ENCODE measurements at regions of chr15 and their contacts with region 1.

Region 1: DNA sequence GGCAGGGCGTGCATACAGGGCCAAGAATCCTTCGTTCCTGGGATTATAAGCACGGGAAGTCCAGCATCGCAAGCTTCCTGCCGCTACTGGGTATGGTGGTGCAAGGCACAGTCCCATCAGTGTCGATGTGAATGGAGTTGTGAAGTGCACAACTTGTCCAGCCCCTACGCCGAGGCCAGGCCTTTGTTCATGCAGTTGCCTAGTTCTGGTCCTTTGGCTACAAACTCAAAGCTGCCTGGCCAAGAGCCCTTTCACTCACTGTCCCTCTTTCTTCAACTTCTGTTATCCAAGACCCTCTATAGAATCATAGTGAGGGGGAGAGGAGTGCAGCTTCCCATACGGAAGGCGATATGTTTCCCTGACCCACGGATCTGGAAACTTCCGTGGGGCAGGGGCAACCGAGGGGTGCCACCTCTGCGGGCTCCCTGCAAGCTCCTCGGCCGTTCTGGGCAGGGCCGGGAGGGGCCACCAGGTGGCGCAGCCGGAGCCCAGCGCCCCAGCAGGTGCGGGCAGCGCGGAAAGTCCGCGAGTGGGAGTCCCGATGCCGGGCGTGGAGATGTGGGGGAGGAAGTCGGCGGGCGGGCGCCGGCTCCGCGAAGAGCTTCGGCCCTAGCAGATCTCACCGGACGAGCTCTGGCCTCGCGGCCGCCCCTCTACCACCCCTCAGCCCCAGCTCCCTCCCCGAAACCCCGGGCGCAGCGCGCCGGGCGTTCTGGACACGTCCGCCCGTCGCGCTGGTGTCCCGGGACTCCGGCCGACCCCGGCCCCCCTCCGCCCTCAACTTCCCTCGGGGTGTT is 693 bp downstream of the RASGRP1 start:
- DNase-seq: peak in 1 of 2 experiments; percentile 90
- H3K4me3 ChIP-seq: peak overlapping the region; percentile 27 to 78 (median 56)
- H3K27ac ChIP-seq: no peak overlapping the region
- H3K4me1 ChIP-seq: no peaks in the 10 kb centered on the region; a peak in 2 of 7 replicates
- H3K27me3 ChIP-seq: peaks cover 9 to 31% (median 16%) of the 10 kb centered on the region in 4 experiments; a peak in 6 of 7 replicates
- CTCF ChIP-seq: peak; percentile 71 to 84 (median 82)
- EP300 ChIP-seq: no peak
- POLR2A ChIP-seq: no peak
- RAD21 ChIP-seq: peak; percentile 36 to 61; a peak in 3 of 4 replicates

Region 2: GRCh38 chr15:38453971-38454695 is 109.8 kb before region 1 on chr15 and contains the start of gene FAM98B:
- CTCF ChIA-PET with region 1: interaction called, 7 read pairs
- POLR2A ChIA-PET with region 1: interaction called, 14 read pairs
- DNase-seq: peak; percentile 64 to 99
- H3K4me3 ChIP-seq: peak within 1 kb of the TSS; percentile 70 to 98 (median 93)
- H3K27ac ChIP-seq: peak within 1 kb of the TSS; percentile 97
- H3K4me1 ChIP-seq: 0 out of 7 replicates have a peak, but pooled peaks cover 0 to 5% (median 0%) of the 10 kb centered on the region in 4 experiments
- H3K27me3 ChIP-seq: no peaks in the 10 kb centered on the region
- CTCF ChIP-seq: no peak
- EP300 ChIP-seq: peak in 1 of 2 experiments; percentile 48; a peak in 1 of 3 replicates
- POLR2A ChIP-seq: peak; percentile 87 to 98
- RAD21 ChIP-seq: peak in 1 of 2 experiments; percentile 8; a peak in 1 of 4 replicates
- total RNA-seq, gene FAM98B: 44.6 and 48.4 TPM in 2 replicates

Region 3: DNA sequence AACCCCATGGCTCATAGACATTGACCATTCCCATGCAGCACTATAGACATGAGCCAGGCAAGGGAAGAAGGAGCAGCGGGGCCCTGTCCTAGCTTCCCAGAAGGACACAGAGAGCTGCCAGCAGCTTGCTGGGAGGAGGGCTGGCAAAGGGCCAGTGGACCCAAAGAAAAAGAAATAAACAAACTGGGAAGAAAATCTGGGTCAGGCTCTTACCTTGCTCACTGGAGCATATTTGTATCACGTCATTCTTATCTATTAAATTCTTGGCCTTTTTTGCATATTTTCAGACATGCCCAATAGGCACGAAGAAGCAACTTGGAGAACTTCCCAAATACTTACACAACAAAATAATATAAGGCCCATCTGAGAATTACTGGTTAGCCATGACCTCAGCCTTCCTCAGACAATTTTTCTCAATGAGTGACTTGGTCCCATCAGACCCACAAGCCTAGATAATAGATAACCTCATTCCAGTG is 27.7 kb before region 1 on chr15:
- CTCF ChIA-PET with region 1: interaction called, 18 read pairs
- POLR2A ChIA-PET with region 1: no interaction called
- DNase-seq: no peak
- H3K4me3 ChIP-seq: no peak overlapping the region
- H3K27ac ChIP-seq: no peak overlapping the region
- H3K4me1 ChIP-seq: peaks cover 0 to 3% (median 0%) of the 10 kb centered on the region in 4 experiments; a peak in 1 of 7 replicates
- H3K27me3 ChIP-seq: no peaks in the 10 kb centered on the region
- CTCF ChIP-seq: no peak
- EP300 ChIP-seq: no peak
- POLR2A ChIP-seq: no peak
- RAD21 ChIP-seq: no peak

Region 4: GRCh38 chr15:38602901-38603670 is 39.2 kb after region 1 on chr15:
- CTCF ChIA-PET with region 1: interaction called, 10 read pairs
- POLR2A ChIA-PET with region 1: no interaction called
- DNase-seq: no peak
- H3K4me3 ChIP-seq: no peak overlapping the region
- H3K27ac ChIP-seq: no peak overlapping the region
- H3K4me1 ChIP-seq: no peaks in the 10 kb centered on the region
- H3K27me3 ChIP-seq: no peaks in the 10 kb centered on the region
- CTCF ChIP-seq: peak; percentile 14 to 22 (median 20)
- EP300 ChIP-seq: no peak
- POLR2A ChIP-seq: no peak
- RAD21 ChIP-seq: peak in 1 of 2 experiments; percentile 25; a peak in 1 of 4 replicates

Region 5: DNA sequence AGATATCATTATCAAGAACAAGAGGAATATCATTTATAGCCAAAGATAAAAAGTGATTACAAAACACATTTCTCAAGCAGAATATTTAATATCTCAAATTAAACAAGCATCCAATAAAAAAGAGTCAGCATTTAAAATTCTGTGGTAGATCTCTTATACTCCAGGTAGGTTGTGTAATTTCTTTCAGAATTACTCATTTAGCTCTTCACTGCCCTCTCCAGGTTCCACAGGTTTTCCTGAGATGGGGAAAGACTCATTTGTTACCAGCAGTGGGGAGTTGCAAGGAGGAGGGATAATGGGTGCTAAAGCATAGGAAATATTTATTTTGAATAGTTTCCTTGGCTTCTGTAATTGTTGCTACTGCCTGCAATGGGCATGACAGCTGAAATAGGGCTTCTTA is 83.8 kb after region 1 on chr15:
- CTCF ChIA-PET with region 1: interaction called, 14 read pairs
- POLR2A ChIA-PET with region 1: no interaction called
- DNase-seq: no peak
- H3K4me3 ChIP-seq: no peak overlapping the region
- H3K27ac ChIP-seq: no peak overlapping the region
- H3K4me1 ChIP-seq: peaks cover 0 to 1% (median 0%) of the 10 kb centered on the region in 4 experiments; a peak in 1 of 7 replicates
- H3K27me3 ChIP-seq: no peaks in the 10 kb centered on the region
- CTCF ChIP-seq: peak in 2 of 3 experiments; percentile 41 to 44; a peak in 3 of 4 replicates
- EP300 ChIP-seq: no peak
- POLR2A ChIP-seq: no peak
- RAD21 ChIP-seq: peak; percentile 50 to 54

Region 6: GRCh38 chr15:38690689-38691332 is 126.9 kb after region 1 on chr15:
- CTCF ChIA-PET with region 1: interaction called, 52 read pairs
- POLR2A ChIA-PET with region 1: no interaction called
- DNase-seq: peak; percentile 46 to 82
- H3K4me3 ChIP-seq: no peak overlapping the region
- H3K27ac ChIP-seq: no peak overlapping the region
- H3K4me1 ChIP-seq: peaks cover 0 to 4% (median 0%) of the 10 kb centered on the region in 4 experiments; a peak in 1 of 7 replicates
- H3K27me3 ChIP-seq: no peaks in the 10 kb centered on the region
- CTCF ChIP-seq: peak in 2 of 3 experiments; percentile 75 to 87; a peak in 3 of 4 replicates
- EP300 ChIP-seq: no peak
- POLR2A ChIP-seq: no peak
- RAD21 ChIP-seq: peak; percentile 70 to 76

Measured in H1 (cell line).